Spleen (tissue), 13 donors: ENCODE measurements at regions of chr12 and their contacts with region 1.

Region 1: DNA sequence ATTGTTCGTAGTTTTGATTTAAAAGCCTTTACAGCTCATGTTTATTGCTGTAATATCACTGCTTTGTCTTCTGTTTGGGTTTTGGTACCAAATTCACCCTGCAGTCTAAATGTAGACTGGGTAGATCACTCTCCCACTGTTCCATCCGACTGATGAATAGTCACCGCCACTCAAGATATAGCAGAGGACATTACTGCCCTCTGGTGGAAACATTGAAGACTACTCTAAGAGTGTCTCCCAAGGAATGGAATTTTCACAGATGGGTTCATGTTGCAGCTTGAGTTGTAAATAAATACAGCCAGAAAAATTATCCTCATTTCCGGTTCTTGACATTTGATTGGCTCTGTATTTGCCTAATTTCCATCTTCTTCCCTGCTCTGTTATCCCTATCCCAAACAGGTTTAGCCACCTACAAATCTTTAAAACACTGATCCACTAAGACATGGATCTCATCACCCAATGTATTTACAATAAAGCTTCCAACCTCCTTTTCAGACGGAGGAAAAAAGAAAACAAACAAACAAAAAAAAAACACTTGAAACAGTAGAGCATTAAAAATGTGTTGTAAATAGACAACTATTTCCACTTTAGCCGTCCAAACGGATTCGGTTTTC is 198.3 kb upstream of the CPNE8 start:
- DNase-seq: no peak
- H3K4me3 ChIP-seq: no peak overlapping the region
- H3K27ac ChIP-seq: no peak overlapping the region
- H3K4me1 ChIP-seq: no peaks in the 10 kb centered on the region
- H3K27me3 ChIP-seq: peaks cover 0 to 5% (median 0%) of the 10 kb centered on the region in 7 donors
- CTCF ChIP-seq: peak; percentile 5 to 80 (median 66)
- POLR2A ChIP-seq: no peak

Region 2: GRCh38 chr12:38324896-38325295 is 778.8 kb before region 1 on chr12:
- intact Hi-C with region 1: loop called (anchors 5 kb)
- DNase-seq: no peak
- H3K4me3 ChIP-seq: no peak overlapping the region
- H3K27ac ChIP-seq: no peak overlapping the region
- H3K4me1 ChIP-seq: peaks cover 0 to 6% (median 0%) of the 10 kb centered on the region in 6 donors
- H3K27me3 ChIP-seq: no peaks in the 10 kb centered on the region
- CTCF ChIP-seq: no peak
- POLR2A ChIP-seq: no peak

Region 3: DNA sequence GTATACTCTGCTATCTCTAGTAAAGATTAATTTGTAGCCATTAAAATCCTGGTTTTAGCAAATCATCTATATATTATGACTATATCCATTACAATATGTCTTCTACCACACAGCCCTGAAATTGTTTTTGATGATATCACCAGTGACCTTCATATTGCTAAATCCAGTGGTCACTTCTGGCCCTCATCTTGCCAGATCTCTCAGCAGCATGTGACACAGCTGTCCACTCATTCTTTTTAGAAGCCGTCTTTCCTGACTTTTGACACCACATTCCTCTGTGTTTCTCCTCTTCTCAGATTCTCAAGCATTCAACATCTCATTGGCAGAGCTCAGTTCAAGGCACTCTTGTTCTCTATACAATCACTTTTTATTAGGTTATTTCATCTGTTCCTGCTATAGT is 253.2 kb before region 1 on chr12:
- intact Hi-C with region 1: no loop called
- DNase-seq: no peak
- H3K4me3 ChIP-seq: no peak overlapping the region
- H3K27ac ChIP-seq: no peak overlapping the region
- H3K4me1 ChIP-seq: peaks cover 0 to 9% (median 2%) of the 10 kb centered on the region in 6 donors
- H3K27me3 ChIP-seq: no peaks in the 10 kb centered on the region
- CTCF ChIP-seq: no peak
- POLR2A ChIP-seq: no peak

Region 4: DNA sequence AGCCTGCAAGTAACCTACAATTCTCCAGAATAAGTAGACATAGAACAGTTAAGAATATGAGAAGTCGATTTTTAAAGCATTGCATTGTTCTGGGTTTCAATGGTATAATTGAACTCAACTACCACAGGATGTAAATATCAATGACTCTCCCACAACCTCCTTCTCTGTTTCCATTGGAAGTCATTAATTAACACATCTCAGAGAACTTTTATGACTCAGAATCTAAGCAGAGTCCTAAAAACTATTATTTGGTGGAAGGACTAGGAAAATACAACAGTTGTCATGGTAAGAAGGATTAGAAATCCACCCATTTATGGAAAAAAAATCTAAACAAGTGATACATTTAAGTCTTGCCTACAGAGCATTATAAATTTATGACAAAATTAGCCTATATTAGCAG is 177.2 kb before region 1 on chr12:
- intact Hi-C with region 1: loop called (anchors 5 kb)
- DNase-seq: no peak
- H3K4me3 ChIP-seq: no peak overlapping the region
- H3K27ac ChIP-seq: no peak overlapping the region
- H3K4me1 ChIP-seq: no peaks in the 10 kb centered on the region
- H3K27me3 ChIP-seq: no peaks in the 10 kb centered on the region
- CTCF ChIP-seq: no peak
- POLR2A ChIP-seq: no peak